ENCODE measurements at regions of chr7 and their contacts with region 1.

Region 1: DNA sequence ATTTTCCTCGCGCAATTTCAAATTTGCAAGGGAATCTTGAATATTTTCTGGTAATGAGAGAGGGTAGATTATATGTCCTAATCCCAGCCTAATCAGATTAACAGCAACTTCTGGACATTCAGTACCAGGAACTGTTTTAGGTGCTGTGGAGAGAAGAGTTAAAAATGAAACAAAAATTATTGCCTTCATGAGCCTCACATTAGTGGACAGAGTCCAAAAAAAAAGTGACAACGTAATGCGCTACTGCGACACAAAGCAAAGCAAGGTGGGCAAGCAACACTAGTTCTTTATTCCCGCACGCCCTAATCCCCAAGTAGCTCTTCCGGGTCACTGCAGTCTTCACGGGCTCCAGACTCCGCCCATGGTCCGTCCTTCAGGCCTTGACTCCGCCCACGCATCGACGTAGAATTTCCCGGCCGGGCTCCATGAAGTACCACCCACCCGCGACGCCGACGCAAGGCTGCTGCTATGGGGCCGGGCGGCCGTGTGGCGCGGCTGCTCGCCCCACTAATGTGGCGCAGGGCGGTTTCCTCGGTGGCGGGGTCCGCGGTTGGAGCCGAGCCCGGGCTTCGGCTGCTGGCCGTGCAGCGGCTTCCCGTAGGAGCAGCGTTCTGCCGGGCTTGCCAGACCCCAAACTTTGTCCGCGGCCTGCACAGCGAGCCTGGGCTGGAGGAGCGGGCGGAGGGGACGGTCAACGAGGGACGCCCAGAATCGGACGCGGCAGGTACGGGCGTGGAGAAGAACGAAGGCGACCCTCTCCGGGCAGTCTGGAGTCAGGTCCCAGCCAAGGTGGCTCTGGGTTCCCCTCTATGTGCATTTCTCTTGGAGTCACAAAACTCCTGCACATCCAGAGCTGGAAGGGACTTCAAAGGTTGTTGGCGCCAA is at the start of gene MALSU1:
- DNase-seq: peak; percentile 90 to 96 (median 94)
- ATAC-seq: peak; percentile 100
- H3K4me3 ChIP-seq: peak within 1 kb of the TSS; percentile 96
- H3K4me3 Mint-ChIP-seq: peak within 1 kb of the TSS; percentile 90 to 97 (median 94)
- H3K27ac ChIP-seq: peak within 1 kb of the TSS; percentile 92
- H3K27ac Mint-ChIP-seq: peak within 1 kb of the TSS; percentile 96 to 100 (median 98)
- H3K4me1 ChIP-seq: peaks cover 14 to 23% of the 10 kb centered on the region in 2 donors
- H3K4me1 Mint-ChIP-seq: peaks cover 34 to 55% (median 48%) of the 10 kb centered on the region in 7 donors
- H3K27me3 ChIP-seq: no peaks in the 10 kb centered on the region
- H3K27me3 Mint-ChIP-seq: peaks cover 0 to 10% (median 0%) of the 10 kb centered on the region in 5 donors
- total RNA-seq, gene MALSU1: 32.7 to 48.3 (median 44.8) TPM

Region 2: GRCh38 chr7:22822486-22823141 is 476.5 kb before region 1 on chr7 and contains the start of gene TOMM7:
- CTCF ChIA-PET with region 1: no interaction called
- POLR2A ChIA-PET with region 1: no interaction called
- intact Hi-C with region 1: loop called (anchors 2 to 10 kb)
- DNase-seq: peak; percentile 68 to 92 (median 90)
- ATAC-seq: peak; percentile 99
- H3K4me3 ChIP-seq: peak within 1 kb of the TSS; percentile 83
- H3K4me3 Mint-ChIP-seq: peak within 1 kb of the TSS; percentile 93 to 100 (median 99)
- H3K27ac ChIP-seq: peak within 1 kb of the TSS; percentile 94
- H3K27ac Mint-ChIP-seq: peak within 1 kb of the TSS; percentile 94 to 100 (median 99)
- H3K4me1 ChIP-seq: peaks cover 6 to 19% of the 10 kb centered on the region in 2 donors
- H3K4me1 Mint-ChIP-seq: peaks cover 15 to 53% (median 43%) of the 10 kb centered on the region in 7 donors
- H3K27me3 ChIP-seq: peaks cover 0 to 4% of the 10 kb centered on the region in 2 donors
- H3K27me3 Mint-ChIP-seq: peaks cover 15 to 36% (median 19%) of the 10 kb centered on the region in 5 donors
- total RNA-seq, gene TOMM7: 302 to 737 (median 649) TPM

Region 3: DNA sequence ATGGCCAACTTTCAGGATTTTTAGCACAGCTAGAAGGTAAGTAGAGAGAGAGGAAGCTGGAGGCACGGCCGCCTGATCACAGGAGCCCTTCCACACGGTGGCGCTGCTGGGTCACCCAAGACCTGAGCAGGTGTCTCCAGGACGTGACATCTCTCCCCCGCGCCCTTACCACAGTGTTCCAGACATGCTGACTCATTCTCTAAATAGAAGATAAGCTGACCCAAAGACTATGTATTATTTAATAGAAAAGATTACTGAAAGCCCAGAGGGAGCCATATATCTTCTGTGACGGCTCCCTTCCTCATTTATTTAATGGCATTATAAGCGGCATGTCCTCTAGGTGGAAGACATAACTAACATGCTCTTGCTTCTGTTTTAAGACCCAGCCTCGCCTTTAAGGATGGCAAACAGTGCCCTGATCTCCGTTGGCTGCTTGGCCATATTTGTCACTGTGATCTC is 26.0 kb before region 1 on chr7:
- CTCF ChIA-PET with region 1: interaction called, 13 read pairs
- POLR2A ChIA-PET with region 1: interaction called, 10 read pairs
- intact Hi-C with region 1: loop called (anchors 1 kb)
- DNase-seq: peak; percentile 64 to 85 (median 80)
- ATAC-seq: peak; percentile 99
- H3K4me3 ChIP-seq: no peak overlapping the region
- H3K4me3 Mint-ChIP-seq: peak overlapping the region; percentile 14 to 82 (median 70)
- H3K27ac ChIP-seq: no peak overlapping the region
- H3K27ac Mint-ChIP-seq: peak overlapping the region in 4 of 9 donors; percentile 3 to 54 (median 23)
- H3K4me1 ChIP-seq: peaks cover 0 to 4% of the 10 kb centered on the region in 2 donors
- H3K4me1 Mint-ChIP-seq: peaks cover 2 to 16% (median 10%) of the 10 kb centered on the region in 7 donors
- H3K27me3 ChIP-seq: no peaks in the 10 kb centered on the region
- H3K27me3 Mint-ChIP-seq: peaks cover 0 to 9% (median 4%) of the 10 kb centered on the region in 5 donors

Region 4: GRCh38 chr7:23357190-23358093 is 58.3 kb after region 1 on chr7:
- CTCF ChIA-PET with region 1: no interaction called
- POLR2A ChIA-PET with region 1: interaction called, 3 read pairs
- intact Hi-C with region 1: loop called (anchors 1 to 2 kb)
- DNase-seq: peak in 4 of 9 donors; percentile 17 to 37 (median 22)
- ATAC-seq: peak; percentile 55
- H3K4me3 ChIP-seq: no peak overlapping the region
- H3K4me3 Mint-ChIP-seq: peak overlapping the region in 2 of 10 donors; percentile 3 to 51
- H3K27ac ChIP-seq: no peak overlapping the region
- H3K27ac Mint-ChIP-seq: no peak overlapping the region
- H3K4me1 ChIP-seq: peaks cover 5 to 6% of the 10 kb centered on the region in 2 donors
- H3K4me1 Mint-ChIP-seq: peaks cover 5 to 19% (median 14%) of the 10 kb centered on the region in 7 donors
- H3K27me3 ChIP-seq: no peaks in the 10 kb centered on the region
- H3K27me3 Mint-ChIP-seq: peaks cover 0 to 47% (median 12%) of the 10 kb centered on the region in 5 donors

Region 5: GRCh38 chr7:23520582-23520981 is 221.5 kb after region 1 on chr7:
- CTCF ChIA-PET with region 1: no interaction called
- POLR2A ChIA-PET with region 1: interaction called, 10 read pairs
- intact Hi-C with region 1: no loop called
- DNase-seq: no peak
- ATAC-seq: no peak
- H3K4me3 ChIP-seq: no peak overlapping the region
- H3K4me3 Mint-ChIP-seq: no peak overlapping the region
- H3K27ac ChIP-seq: no peak overlapping the region
- H3K27ac Mint-ChIP-seq: peak overlapping the region in 1 of 9 donors; percentile 8
- H3K4me1 ChIP-seq: peaks cover 7 to 27% of the 10 kb centered on the region in 2 donors
- H3K4me1 Mint-ChIP-seq: peaks cover 30 to 50% (median 41%) of the 10 kb centered on the region in 7 donors
- H3K27me3 ChIP-seq: no peaks in the 10 kb centered on the region
- H3K27me3 Mint-ChIP-seq: no peaks in the 10 kb centered on the region

Region 6: DNA sequence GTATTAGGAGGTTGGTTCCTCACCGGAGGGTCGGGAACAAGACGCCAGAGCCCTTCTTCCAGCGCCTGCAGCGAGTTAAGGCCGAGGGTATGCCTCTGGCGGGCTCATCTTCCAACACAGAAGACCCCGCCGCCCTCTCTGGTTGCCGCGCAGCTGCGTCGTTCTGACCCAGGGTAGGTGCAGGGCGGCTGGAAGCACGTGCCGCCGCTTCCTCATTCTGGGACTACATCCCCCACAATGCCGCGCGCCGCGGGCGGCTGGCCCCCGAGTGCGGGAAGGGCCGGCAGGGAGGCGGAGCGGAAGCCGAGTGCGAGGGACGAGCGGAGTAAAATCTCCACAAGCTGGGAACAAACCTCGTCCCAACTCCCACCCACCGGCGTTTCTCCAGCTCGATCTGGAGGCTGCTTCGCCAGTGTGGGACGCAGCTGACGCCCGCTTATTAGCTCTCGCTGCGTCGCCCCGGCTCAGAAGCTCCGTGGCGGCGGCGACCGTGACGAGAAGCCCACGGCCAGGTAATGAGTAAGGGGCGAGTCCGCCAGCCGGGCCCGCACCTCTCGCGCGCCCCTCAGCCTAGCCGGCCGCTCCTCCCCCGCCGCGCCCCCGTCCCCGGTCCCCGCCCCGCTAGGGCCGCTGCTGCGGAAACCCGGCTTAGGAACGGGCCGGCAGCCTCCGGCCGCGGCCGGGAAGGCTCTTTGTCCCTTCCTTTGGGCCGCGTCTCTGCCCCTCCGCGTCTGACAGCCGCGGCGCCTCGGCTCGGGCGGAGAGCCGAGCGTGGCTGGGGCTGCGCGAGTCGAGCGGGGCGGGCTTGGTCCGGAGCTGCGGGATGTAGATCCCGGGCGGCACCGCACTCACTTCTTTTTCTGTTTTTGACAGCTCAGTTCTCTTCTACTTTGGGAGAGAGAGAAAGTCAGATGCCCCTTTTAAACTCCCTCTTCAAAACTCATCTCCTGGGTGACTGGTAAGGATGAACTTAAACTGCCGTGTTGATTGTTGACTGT is 298.3 kb after region 1 on chr7 and contains the start of gene CCDC126:
- CTCF ChIA-PET with region 1: no interaction called
- POLR2A ChIA-PET with region 1: no interaction called
- intact Hi-C with region 1: loop called in 1 of 2 experiments (anchors 1 kb)
- DNase-seq: peak; percentile 64 to 83 (median 76)
- ATAC-seq: peak; percentile 98
- H3K4me3 ChIP-seq: peak within 1 kb of the TSS; percentile 93
- H3K4me3 Mint-ChIP-seq: peak within 1 kb of the TSS; percentile 86 to 98 (median 94)
- H3K27ac ChIP-seq: peak within 1 kb of the TSS; percentile 74
- H3K27ac Mint-ChIP-seq: peak within 1 kb of the TSS; percentile 59 to 86 (median 80)
- H3K4me1 ChIP-seq: peaks cover 9 to 13% of the 10 kb centered on the region in 2 donors
- H3K4me1 Mint-ChIP-seq: peaks cover 34 to 52% (median 39%) of the 10 kb centered on the region in 7 donors
- H3K27me3 ChIP-seq: no peaks in the 10 kb centered on the region
- H3K27me3 Mint-ChIP-seq: peaks cover 0 to 7% (median 4%) of the 10 kb centered on the region in 5 donors
- total RNA-seq, gene CCDC126: 7.0 to 24.7 (median 17.1) TPM

Region 7: GRCh38 chr7:25125137-25125946 is 1826.2 kb after region 1 on chr7 and contains the start of gene CYCS:
- CTCF ChIA-PET with region 1: no interaction called
- POLR2A ChIA-PET with region 1: no interaction called
- intact Hi-C with region 1: loop called in 1 of 2 experiments (anchors 10 kb)
- DNase-seq: peak; percentile 97 to 100 (median 99)
- ATAC-seq: peak; percentile 96
- H3K4me3 ChIP-seq: peak within 1 kb of the TSS; percentile 74
- H3K4me3 Mint-ChIP-seq: peak within 1 kb of the TSS; percentile 88 to 100 (median 100)
- H3K27ac ChIP-seq: peak within 1 kb of the TSS; percentile 93
- H3K27ac Mint-ChIP-seq: peak within 1 kb of the TSS; percentile 98 to 100 (median 100)
- H3K4me1 ChIP-seq: peaks cover 7 to 13% of the 10 kb centered on the region in 2 donors
- H3K4me1 Mint-ChIP-seq: peaks cover 15 to 40% (median 23%) of the 10 kb centered on the region in 7 donors
- H3K27me3 ChIP-seq: no peaks in the 10 kb centered on the region
- H3K27me3 Mint-ChIP-seq: peaks cover 0 to 5% (median 0%) of the 10 kb centered on the region in 5 donors
- total RNA-seq, gene CYCS: 40.4 to 130 (median 114) TPM